WTC11 (cell line): ENCODE measurements at regions of chr2 and their contacts with region 1.

Region 1: GRCh38 chr2:189762551-189763298 is at the start of gene OSGEPL1:
- DNase-seq: peak; percentile 93
- ATAC-seq: peak; percentile 97
- H3K4me3 Mint-ChIP-seq: peak within 1 kb of the TSS; percentile 89
- H3K27ac Mint-ChIP-seq: peak within 1 kb of the TSS; percentile 96
- H3K4me1 Mint-ChIP-seq: peaks cover 3% of the 10 kb centered on the region; the same call in 1 of the 2 replicates
- H3K27me3 Mint-ChIP-seq: no peaks in the 10 kb centered on the region
- CTCF ChIP-seq: peak; percentile 20; the same call in 1 of the 2 replicates
- total RNA-seq, gene OSGEPL1: 15.2 to 17.1 TPM (median 16.7 TPM) in 3 replicates

Region 2: DNA sequence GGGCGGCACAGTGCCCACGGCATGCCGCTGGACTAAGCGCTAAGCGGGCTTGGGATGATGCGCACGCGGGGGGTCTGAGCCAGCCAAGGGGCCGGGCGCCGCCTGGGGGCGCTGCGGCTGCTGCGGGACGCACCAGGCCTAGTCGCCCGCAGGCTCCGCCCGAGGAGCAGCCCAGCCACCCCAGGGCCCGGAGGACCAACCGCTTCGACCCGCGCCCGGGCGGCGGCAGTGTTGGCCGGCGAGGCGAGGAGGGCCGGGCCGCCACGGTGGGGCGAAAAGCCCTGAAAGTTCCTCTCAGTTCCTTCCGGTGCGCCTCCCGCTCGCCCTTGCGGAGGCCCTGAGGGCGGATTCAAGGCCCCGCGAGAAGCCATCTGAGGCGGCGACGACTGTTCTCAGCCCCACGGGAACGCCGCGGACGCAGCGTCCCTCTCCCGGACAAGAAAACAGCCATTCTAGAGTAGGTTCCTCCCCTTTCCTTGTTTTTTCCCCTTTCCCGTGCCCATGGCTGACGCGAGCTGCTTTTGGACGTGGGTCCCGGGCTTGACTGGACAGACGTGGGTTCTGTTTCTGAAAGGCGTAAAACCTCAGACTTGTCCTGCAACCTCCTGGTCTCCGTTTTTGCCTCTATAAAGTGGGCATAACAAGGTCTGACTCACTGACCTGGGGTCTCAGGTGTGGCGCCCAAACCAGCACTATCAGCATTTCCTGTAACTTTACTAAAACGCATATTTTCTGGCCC is 88.2 kb before region 1 on chr2 and contains the start of gene ANKAR:
- CTCF ChIA-PET with region 1: interaction called, 13 read pairs
- POLR2A ChIA-PET with region 1: interaction called, 5 read pairs
- DNase-seq: peak; percentile 92
- ATAC-seq: peak; percentile 97
- H3K4me3 Mint-ChIP-seq: peak within 1 kb of the TSS; percentile 93
- H3K27ac Mint-ChIP-seq: peak within 1 kb of the TSS; percentile 88
- H3K4me1 Mint-ChIP-seq: peaks cover 15% of the 10 kb centered on the region
- H3K27me3 Mint-ChIP-seq: no peaks in the 10 kb centered on the region
- CTCF ChIP-seq: peak; percentile 61; the same call in 1 of the 2 replicates
- total RNA-seq, gene ANKAR: 1.3 to 2.9 TPM (median 1.6 TPM) in 3 replicates

Region 3: GRCh38 chr2:189751080-189751658 is 11.6 kb before region 1 on chr2:
- CTCF ChIA-PET with region 1: interaction called, 15 read pairs
- POLR2A ChIA-PET with region 1: no interaction called
- DNase-seq: peak; percentile 53
- ATAC-seq: peak; percentile 88
- H3K4me3 Mint-ChIP-seq: no peak overlapping the region
- H3K27ac Mint-ChIP-seq: no peak overlapping the region
- H3K4me1 Mint-ChIP-seq: no peaks in the 10 kb centered on the region
- H3K27me3 Mint-ChIP-seq: no peaks in the 10 kb centered on the region
- CTCF ChIP-seq: peak; percentile 67

Region 4: DNA sequence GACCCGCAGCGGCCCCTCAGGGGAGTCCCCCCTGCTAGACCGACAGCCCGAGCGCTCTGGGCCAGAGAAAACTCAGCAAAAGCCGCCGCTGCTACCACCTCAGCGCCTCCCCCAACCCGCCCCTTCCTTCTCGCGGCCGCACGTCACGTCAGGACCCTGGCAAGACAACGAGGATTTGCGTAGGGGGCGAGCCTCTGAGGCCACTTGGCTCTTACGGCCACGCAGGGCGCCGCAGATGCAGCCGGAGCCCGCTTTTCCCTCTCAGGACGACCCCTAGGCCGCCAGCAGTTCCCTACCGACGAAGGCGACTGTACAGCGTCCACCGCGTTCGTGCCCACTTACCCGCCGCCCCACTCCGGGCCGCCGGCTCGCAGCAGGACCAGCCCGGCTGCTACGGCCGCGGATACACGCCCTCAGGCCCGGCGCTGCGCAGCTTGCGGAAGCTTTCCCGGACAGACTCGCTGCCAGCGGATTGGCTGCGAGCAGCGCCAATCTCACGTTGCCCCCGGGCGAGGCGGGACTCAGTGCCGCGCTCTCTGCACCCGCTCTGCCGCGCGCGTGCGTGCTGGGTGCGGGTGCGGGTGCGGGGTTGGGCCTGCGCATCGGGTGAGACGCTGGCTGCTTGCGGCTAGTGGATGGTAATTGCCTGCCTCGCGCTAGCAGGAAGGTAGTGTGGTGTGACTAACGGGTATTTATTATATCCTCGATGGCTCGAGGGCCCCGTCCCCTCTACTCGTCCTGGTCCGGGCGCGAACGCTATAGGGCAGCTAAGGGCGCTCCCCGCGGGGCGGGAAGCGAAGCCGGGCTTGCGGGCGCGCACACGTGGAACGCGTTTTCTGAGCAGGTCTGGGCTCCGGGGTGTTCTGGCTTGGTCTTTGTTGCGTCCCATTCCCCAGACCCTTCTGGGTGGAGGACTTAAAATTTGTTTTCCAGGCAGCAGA is 21.5 kb after region 1 on chr2 and contains the starts of genes ORMDL1 and PMS1:
- CTCF ChIA-PET with region 1: interaction called, 13 read pairs
- POLR2A ChIA-PET with region 1: interaction called, 15 read pairs
- DNase-seq: peak; percentile 93
- ATAC-seq: peak; percentile 95
- H3K4me3 Mint-ChIP-seq: peak within 1 kb of the TSS; percentile 82
- H3K27ac Mint-ChIP-seq: peak within 1 kb of the TSS; percentile 92
- H3K4me1 Mint-ChIP-seq: peaks cover 30% of the 10 kb centered on the region
- H3K27me3 Mint-ChIP-seq: no peaks in the 10 kb centered on the region
- CTCF ChIP-seq: no peak
- total RNA-seq, gene ORMDL1: 38.4 to 40.1 TPM (median 39.9 TPM) in 3 replicates
- total RNA-seq, gene PMS1: 49.8 to 74.5 TPM (median 69.5 TPM) in 3 replicates